Heart left ventricle (tissue), 16 donors: ENCODE measurements at regions of chr4 and their contacts with region 1.

Region 1: DNA sequence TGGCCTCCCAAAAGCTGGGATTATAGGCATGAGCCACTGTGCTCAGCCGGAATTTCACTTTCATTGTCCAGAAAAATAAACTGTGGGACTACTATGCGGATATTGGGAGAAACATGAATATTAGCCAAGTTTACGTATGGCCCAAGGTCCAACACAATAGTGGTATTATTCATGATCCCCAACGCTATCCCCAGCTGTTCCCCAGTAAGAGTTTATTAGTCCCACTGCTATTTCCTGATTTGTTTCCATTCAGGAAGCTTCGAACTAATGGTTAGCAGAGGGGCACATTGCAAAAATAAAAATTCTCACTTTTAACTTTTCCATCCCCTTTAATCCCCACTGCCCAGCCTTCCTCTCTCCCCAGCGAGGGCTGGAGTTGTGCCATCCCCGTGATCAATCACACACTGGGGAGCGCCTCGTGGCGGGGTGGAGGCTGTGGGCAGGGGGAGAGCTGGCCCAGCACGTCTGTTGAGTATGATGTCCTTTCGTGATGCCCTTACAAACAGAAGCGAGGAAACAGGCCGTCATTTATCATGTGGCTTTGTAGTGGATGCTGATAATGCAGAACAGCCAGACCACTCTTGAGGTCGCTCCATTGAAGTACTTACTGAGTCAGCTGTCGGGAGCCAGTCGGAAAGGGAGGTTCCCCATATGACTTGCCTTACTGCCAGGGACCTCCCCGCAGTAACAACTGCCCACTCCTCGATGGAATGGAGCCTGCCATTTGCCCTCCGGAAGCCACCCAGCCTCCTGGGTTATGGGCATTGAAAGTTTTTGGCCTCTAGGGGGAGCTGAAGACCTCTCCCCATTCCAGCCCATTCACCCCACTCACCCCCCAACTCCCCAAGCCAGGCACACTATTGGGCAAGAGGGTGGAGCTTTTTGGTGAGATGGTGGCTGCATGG is 117.0 kb downstream of the KDR start:
- DNase-seq: no peak
- ATAC-seq: peak in 3 of 4 donors; percentile 24 to 50 (median 41)
- H3K4me3 ChIP-seq: no peak overlapping the region
- H3K27ac ChIP-seq: no peak overlapping the region
- H3K4me1 ChIP-seq: peaks cover 0 to 21% (median 10%) of the 10 kb centered on the region in 12 donors
- H3K27me3 ChIP-seq: no peaks in the 10 kb centered on the region
- CTCF ChIP-seq: peak; percentile 14 to 48 (median 26)
- POLR2A ChIP-seq: no peak

Region 2: DNA sequence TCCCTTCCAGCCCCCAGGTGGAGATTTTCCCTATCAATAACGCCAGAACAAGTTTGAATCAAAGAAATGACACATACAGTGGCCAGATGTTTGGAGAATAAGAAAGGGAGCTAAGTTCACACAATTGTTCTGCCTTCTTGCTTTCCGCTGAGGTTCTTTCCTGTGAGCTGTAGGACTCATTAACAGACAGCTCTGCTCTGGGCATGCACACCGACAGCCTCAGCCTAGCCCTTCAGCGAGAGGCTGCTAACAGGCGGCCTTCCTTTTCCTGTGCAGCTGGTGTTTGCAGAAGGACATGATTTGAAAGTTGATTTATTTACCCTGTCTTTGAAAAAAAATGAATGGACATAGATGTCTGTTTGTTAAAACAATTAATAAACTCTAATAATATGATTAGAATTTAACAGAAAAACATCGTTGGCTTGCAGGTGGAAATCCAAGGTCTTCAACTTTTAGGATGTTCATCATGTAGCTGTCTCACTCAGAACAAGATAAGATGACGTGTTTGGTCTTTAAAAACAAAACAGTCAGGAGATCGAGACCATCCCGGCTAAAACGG is 66.3 kb before region 1 on chr4:
- intact Hi-C with region 1: no loop called
- DNase-seq: peak in 3 of 5 donors; percentile 39 to 51 (median 41)
- ATAC-seq: peak; percentile 59 to 93 (median 64)
- H3K4me3 ChIP-seq: peak overlapping the region in 2 of 12 donors; percentile 17 to 18
- H3K27ac ChIP-seq: peak overlapping the region in 8 of 12 donors; percentile 1 to 66 (median 36)
- H3K4me1 ChIP-seq: peaks cover 0 to 16% (median 4%) of the 10 kb centered on the region in 12 donors
- H3K27me3 ChIP-seq: no peaks in the 10 kb centered on the region
- CTCF ChIP-seq: no peak
- POLR2A ChIP-seq: no peak

Region 3: GRCh38 chr4:55078987-55079386 is 70.6 kb after region 1 on chr4:
- intact Hi-C with region 1: loop called in 2 of 10 experiments (anchors 5 to 10 kb)
- DNase-seq: peak; percentile 73 to 81 (median 77)
- ATAC-seq: peak; percentile 64 to 95 (median 85)
- H3K4me3 ChIP-seq: peak overlapping the region in 2 of 12 donors; percentile 5 to 7
- H3K27ac ChIP-seq: peak overlapping the region; percentile 42 to 86 (median 78)
- H3K4me1 ChIP-seq: peaks cover 0 to 28% (median 16%) of the 10 kb centered on the region in 12 donors
- H3K27me3 ChIP-seq: no peaks in the 10 kb centered on the region
- CTCF ChIP-seq: no peak
- POLR2A ChIP-seq: no peak

Region 4: GRCh38 chr4:55087009-55087929 is 78.9 kb after region 1 on chr4:
- intact Hi-C with region 1: loop called in 3 of 10 experiments (anchors 5 to 10 kb)
- DNase-seq: no peak
- ATAC-seq: no peak
- H3K4me3 ChIP-seq: no peak overlapping the region
- H3K27ac ChIP-seq: peak overlapping the region in 3 of 12 donors; percentile 9 to 12 (median 12)
- H3K4me1 ChIP-seq: peaks cover 0 to 63% (median 21%) of the 10 kb centered on the region in 12 donors
- H3K27me3 ChIP-seq: no peaks in the 10 kb centered on the region
- CTCF ChIP-seq: no peak
- POLR2A ChIP-seq: no peak

Region 5: DNA sequence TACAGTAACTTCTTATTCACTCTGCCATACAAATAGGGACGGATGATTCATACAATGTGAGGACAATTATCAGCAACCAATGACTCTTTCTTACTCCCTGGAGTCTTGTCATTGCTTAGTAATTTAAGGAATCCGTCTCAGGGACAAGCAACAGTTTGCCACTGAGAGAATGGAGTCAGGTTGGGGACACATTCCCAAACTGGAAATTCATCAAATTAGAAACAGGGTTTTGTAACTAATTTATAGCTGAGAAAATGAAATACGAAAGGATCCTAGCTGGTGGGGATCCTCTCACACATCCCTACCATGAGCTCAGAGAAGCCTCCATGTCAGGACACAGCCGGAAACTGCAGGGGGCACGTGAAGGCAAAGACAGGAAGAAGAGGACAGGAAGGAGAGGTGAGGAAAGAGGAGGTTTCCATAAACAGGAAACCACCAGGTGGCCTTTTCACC is 167.4 kb after region 1 on chr4:
- intact Hi-C with region 1: loop called in 2 of 10 experiments (anchors 5 to 10 kb)
- DNase-seq: no peak
- ATAC-seq: no peak
- H3K4me3 ChIP-seq: no peak overlapping the region
- H3K27ac ChIP-seq: peak overlapping the region in 5 of 12 donors; percentile 13 to 73 (median 33)
- H3K4me1 ChIP-seq: peaks cover 0 to 28% (median 15%) of the 10 kb centered on the region in 12 donors
- H3K27me3 ChIP-seq: no peaks in the 10 kb centered on the region
- CTCF ChIP-seq: no peak
- POLR2A ChIP-seq: no peak

Region 6: GRCh38 chr4:55184600-55185523 is 176.4 kb after region 1 on chr4:
- intact Hi-C with region 1: loop called in 2 of 10 experiments (anchors 5 to 10 kb)
- DNase-seq: peak in 3 of 5 donors; percentile 27 to 47 (median 41)
- ATAC-seq: peak; percentile 53 to 72 (median 60)
- H3K4me3 ChIP-seq: no peak overlapping the region
- H3K27ac ChIP-seq: peak overlapping the region in 7 of 12 donors; percentile 7 to 29 (median 20)
- H3K4me1 ChIP-seq: peaks cover 0 to 37% (median 19%) of the 10 kb centered on the region in 12 donors
- H3K27me3 ChIP-seq: no peaks in the 10 kb centered on the region
- CTCF ChIP-seq: peak in 6 of 12 donors; percentile 10 to 39 (median 20)
- POLR2A ChIP-seq: no peak

Region 7: DNA sequence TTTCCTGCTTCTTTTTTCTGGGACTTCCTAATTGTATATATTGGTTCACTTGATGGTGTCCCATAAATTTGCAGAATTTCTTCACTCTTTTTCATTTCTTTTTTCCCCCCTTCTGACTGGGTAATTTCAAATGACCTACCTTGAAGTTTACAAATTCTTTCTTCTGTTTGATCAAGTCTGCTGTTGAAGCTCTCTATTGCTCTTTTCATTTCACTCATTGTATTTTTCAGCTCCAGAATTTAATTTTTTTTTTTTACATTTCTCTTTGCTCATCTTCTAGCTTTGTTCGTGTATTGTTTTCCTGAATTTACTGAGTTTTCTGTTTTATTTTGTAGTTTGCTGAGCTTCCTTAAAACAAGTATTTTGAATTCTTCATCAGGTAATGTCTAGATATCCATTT is 275.9 kb after region 1 on chr4:
- intact Hi-C with region 1: no loop called
- DNase-seq: no peak
- ATAC-seq: no peak
- H3K4me3 ChIP-seq: no peak overlapping the region
- H3K27ac ChIP-seq: no peak overlapping the region
- H3K4me1 ChIP-seq: no peaks in the 10 kb centered on the region
- H3K27me3 ChIP-seq: no peaks in the 10 kb centered on the region
- CTCF ChIP-seq: no peak
- POLR2A ChIP-seq: no peak

Region 8: GRCh38 chr4:55312489-55313101 is 304.2 kb after region 1 on chr4:
- intact Hi-C with region 1: loop called in 1 of 10 experiments (anchors 5 kb)
- DNase-seq: peak in 4 of 5 donors; percentile 45 to 52 (median 50)
- ATAC-seq: peak; percentile 33 to 94 (median 87)
- H3K4me3 ChIP-seq: no peak overlapping the region
- H3K27ac ChIP-seq: peak overlapping the region in 4 of 12 donors; percentile 8 to 27 (median 20)
- H3K4me1 ChIP-seq: peaks cover 0 to 12% (median 0%) of the 10 kb centered on the region in 12 donors
- H3K27me3 ChIP-seq: no peaks in the 10 kb centered on the region
- CTCF ChIP-seq: peak; percentile 53 to 79 (median 64)
- POLR2A ChIP-seq: no peak

Region 9: GRCh38 chr4:55321707-55322264 is 313.4 kb after region 1 on chr4:
- intact Hi-C with region 1: loop called in 1 of 10 experiments (anchors 5 kb)
- DNase-seq: peak in 4 of 5 donors; percentile 70 to 76 (median 72)
- ATAC-seq: peak in 2 of 4 donors; percentile 50 to 59
- H3K4me3 ChIP-seq: no peak overlapping the region
- H3K27ac ChIP-seq: no peak overlapping the region
- H3K4me1 ChIP-seq: peaks cover 0 to 20% (median 3%) of the 10 kb centered on the region in 12 donors
- H3K27me3 ChIP-seq: no peaks in the 10 kb centered on the region
- CTCF ChIP-seq: peak; percentile 46 to 81 (median 72)
- POLR2A ChIP-seq: no peak